ENCODE measurements at regions of chr4 and their contacts with region 1.

Region 1: DNA sequence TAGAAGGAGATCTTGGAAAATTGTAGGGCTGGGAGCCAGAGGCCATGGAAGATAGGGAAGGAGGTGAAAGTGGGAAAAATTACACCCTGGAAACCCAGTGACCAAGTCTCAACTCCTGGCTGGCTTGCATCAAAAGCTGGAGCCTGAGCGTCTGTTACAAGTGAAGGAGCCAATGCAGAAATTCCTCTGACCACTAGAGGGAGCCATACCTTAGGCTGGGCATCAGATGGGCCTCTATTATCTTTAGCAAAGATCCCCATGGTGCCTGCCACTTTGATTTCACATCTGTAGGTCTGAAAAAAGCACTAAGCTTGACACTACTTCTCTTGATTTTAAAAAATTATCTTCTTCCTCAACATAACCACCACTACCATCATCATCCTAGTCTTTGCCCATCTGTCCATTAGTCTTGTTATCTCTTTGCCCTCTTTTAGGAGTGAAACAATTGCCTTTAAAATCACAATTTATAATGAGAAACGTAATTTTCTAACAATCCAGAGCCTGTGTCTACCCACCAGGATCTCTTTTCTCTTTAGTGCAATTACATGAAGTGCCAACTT is 62.9 kb downstream of the ANAPC4 start:
- DNase-seq: peak in 1 of 2 experiments; percentile 84
- H3K4me3 ChIP-seq: no peak overlapping the region
- H3K27ac ChIP-seq: no peak overlapping the region
- H3K4me1 ChIP-seq: no peaks in the 10 kb centered on the region; a peak in 2 of 7 replicates
- H3K27me3 ChIP-seq: no peaks in the 10 kb centered on the region
- CTCF ChIP-seq: peak; percentile 47 to 92 (median 87)
- EP300 ChIP-seq: no peak
- POLR2A ChIP-seq: no peak
- RAD21 ChIP-seq: peak; percentile 88 to 89

Region 2: GRCh38 chr4:25466966-25467697 is 27.1 kb after region 1 on chr4:
- CTCF ChIA-PET with region 1: interaction called, 13 read pairs
- POLR2A ChIA-PET with region 1: interaction called, 3 read pairs
- DNase-seq: no peak
- H3K4me3 ChIP-seq: no peak overlapping the region
- H3K27ac ChIP-seq: no peak overlapping the region
- H3K4me1 ChIP-seq: no peaks in the 10 kb centered on the region
- H3K27me3 ChIP-seq: no peaks in the 10 kb centered on the region; a peak in 1 of 7 replicates
- CTCF ChIP-seq: no peak
- EP300 ChIP-seq: no peak
- POLR2A ChIP-seq: no peak
- RAD21 ChIP-seq: no peak

Region 3: GRCh38 chr4:25531272-25531671 is 91.3 kb after region 1 on chr4:
- CTCF ChIA-PET with region 1: interaction called, 32 read pairs
- POLR2A ChIA-PET with region 1: no interaction called
- DNase-seq: no peak
- H3K4me3 ChIP-seq: no peak overlapping the region
- H3K27ac ChIP-seq: no peak overlapping the region
- H3K4me1 ChIP-seq: no peaks in the 10 kb centered on the region
- H3K27me3 ChIP-seq: no peaks in the 10 kb centered on the region
- CTCF ChIP-seq: peak; percentile 8 to 44 (median 37); a peak in 3 of 4 replicates
- EP300 ChIP-seq: no peak
- POLR2A ChIP-seq: no peak
- RAD21 ChIP-seq: peak; percentile 38 to 54

Region 4: GRCh38 chr4:25654971-25655963 is 215.3 kb after region 1 on chr4 and contains the start of gene SLC34A2:
- CTCF ChIA-PET with region 1: interaction called, 35 read pairs
- POLR2A ChIA-PET with region 1: interaction called, 3 read pairs
- DNase-seq: peak; percentile 46 to 84
- H3K4me3 ChIP-seq: peak within 1 kb of the TSS; percentile 31 to 58 (median 38)
- H3K27ac ChIP-seq: no peak within 1 kb of the TSS
- H3K4me1 ChIP-seq: peaks cover 14 to 28% (median 18%) of the 10 kb centered on the region in 4 experiments
- H3K27me3 ChIP-seq: peaks cover 1 to 36% (median 34%) of the 10 kb centered on the region in 4 experiments
- CTCF ChIP-seq: peak in 1 of 3 experiments; percentile 3; a peak in 2 of 4 replicates
- EP300 ChIP-seq: peak in 1 of 2 experiments; percentile 9; a peak in 1 of 3 replicates
- POLR2A ChIP-seq: peak in 1 of 2 experiments; percentile 2; a peak in 1 of 3 replicates
- RAD21 ChIP-seq: peak in 1 of 2 experiments; percentile 25; a peak in 2 of 4 replicates
- total RNA-seq, gene SLC34A2: 2.9 and 3.4 TPM in 2 replicates

Region 5: GRCh38 chr4:25727711-25728493 is 287.9 kb after region 1 on chr4:
- CTCF ChIA-PET with region 1: interaction called, 12 read pairs
- POLR2A ChIA-PET with region 1: no interaction called
- DNase-seq: no peak
- H3K4me3 ChIP-seq: no peak overlapping the region
- H3K27ac ChIP-seq: no peak overlapping the region
- H3K4me1 ChIP-seq: no peaks in the 10 kb centered on the region
- H3K27me3 ChIP-seq: no peaks in the 10 kb centered on the region
- CTCF ChIP-seq: no peak
- EP300 ChIP-seq: no peak
- POLR2A ChIP-seq: no peak
- RAD21 ChIP-seq: no peak

Region 6: DNA sequence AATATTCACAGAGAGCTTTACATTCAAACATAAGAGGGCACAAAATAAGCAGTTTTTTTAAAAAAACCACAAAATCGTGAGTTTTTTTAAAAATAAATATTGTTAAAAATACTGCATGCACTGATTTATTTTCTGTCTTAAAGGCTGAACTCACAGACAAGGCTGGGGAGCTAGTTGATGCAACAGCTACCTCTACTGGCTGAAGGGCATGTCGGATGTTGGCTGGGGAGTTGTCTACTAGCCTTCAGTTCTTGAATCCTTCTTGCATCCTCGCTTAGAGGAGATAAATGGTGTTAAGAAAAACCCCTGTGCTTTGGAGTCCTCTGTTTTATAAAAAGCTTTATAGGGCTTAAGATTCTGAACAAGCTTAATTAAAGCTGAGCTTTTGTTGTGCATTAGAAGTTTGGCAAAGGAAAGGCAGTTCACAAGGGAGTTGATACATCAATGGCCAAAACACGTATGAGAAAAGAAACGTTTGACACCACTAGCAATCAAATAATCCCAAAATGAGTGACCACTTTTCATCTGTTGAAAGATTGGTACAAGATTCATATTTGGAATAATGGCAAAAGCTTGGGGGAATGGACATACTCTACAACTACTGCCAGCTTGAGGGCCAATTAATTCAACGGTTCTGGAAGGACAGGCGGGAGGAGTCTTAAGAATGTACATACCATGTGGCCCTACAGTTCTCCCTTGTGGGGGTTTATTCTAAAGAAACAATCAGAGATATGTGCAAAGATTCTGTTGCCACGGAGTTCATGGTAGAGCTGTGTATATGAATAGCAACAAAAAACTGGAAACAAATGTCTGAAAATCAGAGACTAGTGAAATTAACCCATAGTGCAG is 328.1 kb after region 1 on chr4:
- CTCF ChIA-PET with region 1: interaction called, 248 read pairs
- POLR2A ChIA-PET with region 1: no interaction called
- DNase-seq: peak in 1 of 2 experiments; percentile 33
- H3K4me3 ChIP-seq: no peak overlapping the region
- H3K27ac ChIP-seq: no peak overlapping the region
- H3K4me1 ChIP-seq: no peaks in the 10 kb centered on the region
- H3K27me3 ChIP-seq: no peaks in the 10 kb centered on the region
- CTCF ChIP-seq: peak; percentile 82 to 92 (median 88)
- EP300 ChIP-seq: no peak
- POLR2A ChIP-seq: no peak
- RAD21 ChIP-seq: peak; percentile 96 to 98